Naive thymus-derived CD4-positive, alpha-beta T cell (primary cell): ENCODE measurements at regions of chr5 and their contacts with region 1.

Region 1: DNA sequence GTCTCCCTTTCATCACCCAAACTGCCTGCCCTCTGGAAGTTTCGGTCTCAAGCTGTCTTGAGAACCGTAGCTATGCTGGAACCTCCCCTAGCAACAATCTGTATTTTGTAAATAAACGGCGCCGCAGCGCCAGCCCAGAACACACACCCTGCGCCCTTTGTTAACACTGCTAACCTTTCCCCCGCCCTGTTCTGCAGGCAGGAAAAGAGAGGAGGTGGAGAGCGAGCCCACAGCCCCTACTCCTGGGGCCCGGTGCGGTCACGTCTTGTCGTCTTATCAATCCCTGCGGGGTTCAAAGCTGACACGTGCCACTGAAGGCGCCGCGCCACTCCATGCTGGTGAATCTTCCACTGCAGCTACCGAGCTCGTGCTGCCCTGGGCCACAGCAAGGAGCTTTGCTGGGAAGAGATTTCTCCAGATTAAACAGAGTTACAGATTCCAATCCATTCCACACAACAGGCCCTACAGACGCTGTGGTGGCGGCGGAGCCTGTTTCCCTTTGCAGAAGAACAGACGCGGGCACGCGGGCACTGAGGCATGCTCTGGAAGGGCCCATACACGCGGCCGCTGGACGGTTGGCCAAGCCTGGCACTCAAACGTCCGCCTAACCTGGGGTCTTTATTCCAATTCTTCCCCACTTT is 25.3 kb downstream of the ZDHHC11B start:
- DNase-seq: peak in 7 of 9 donors; percentile 12 to 60 (median 45)
- ATAC-seq: peak; percentile 89
- H3K4me3 ChIP-seq: no peak overlapping the region
- H3K4me3 Mint-ChIP-seq: peak overlapping the region in 8 of 10 donors; percentile 23 to 76 (median 50)
- H3K27ac ChIP-seq: no peak overlapping the region
- H3K27ac Mint-ChIP-seq: peak overlapping the region in 5 of 9 donors; percentile 30 to 92 (median 73)
- H3K4me1 ChIP-seq: peaks cover 0 to 6% of the 10 kb centered on the region in 2 donors
- H3K4me1 Mint-ChIP-seq: peaks cover 4 to 20% (median 8%) of the 10 kb centered on the region in 7 donors
- H3K27me3 ChIP-seq: no peaks in the 10 kb centered on the region
- H3K27me3 Mint-ChIP-seq: no peaks in the 10 kb centered on the region

Region 2: DNA sequence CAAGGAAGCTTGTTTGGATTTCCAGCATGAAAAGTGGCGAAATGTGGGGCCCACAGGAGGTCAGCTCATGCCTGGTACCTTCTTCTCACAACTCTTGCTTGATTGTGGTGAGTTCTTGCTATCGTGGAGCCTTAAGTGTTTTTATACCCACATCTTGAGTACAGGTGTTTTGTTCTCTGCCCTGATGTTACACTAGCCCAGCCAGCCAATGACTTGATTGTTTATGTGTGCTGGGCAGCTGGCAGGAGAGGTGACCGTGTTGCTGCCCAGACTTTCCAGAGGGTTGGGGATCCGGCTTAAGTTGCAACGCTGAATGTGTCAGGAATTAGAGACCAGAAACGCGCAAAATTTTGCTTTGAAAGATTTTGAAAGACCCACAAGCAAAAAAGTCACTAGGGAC is 42.1 kb before region 1 on chr5:
- CTCF ChIA-PET with region 1: no interaction called
- POLR2A ChIA-PET with region 1: no interaction called
- intact Hi-C with region 1: no loop called
- DNase-seq: no peak
- ATAC-seq: no peak
- H3K4me3 ChIP-seq: no peak overlapping the region
- H3K4me3 Mint-ChIP-seq: no peak overlapping the region
- H3K27ac ChIP-seq: no peak overlapping the region
- H3K27ac Mint-ChIP-seq: no peak overlapping the region
- H3K4me1 ChIP-seq: no peaks in the 10 kb centered on the region
- H3K4me1 Mint-ChIP-seq: no peaks in the 10 kb centered on the region
- H3K27me3 ChIP-seq: no peaks in the 10 kb centered on the region
- H3K27me3 Mint-ChIP-seq: peaks cover 10 to 58% (median 40%) of the 10 kb centered on the region in 5 donors

Region 3: DNA sequence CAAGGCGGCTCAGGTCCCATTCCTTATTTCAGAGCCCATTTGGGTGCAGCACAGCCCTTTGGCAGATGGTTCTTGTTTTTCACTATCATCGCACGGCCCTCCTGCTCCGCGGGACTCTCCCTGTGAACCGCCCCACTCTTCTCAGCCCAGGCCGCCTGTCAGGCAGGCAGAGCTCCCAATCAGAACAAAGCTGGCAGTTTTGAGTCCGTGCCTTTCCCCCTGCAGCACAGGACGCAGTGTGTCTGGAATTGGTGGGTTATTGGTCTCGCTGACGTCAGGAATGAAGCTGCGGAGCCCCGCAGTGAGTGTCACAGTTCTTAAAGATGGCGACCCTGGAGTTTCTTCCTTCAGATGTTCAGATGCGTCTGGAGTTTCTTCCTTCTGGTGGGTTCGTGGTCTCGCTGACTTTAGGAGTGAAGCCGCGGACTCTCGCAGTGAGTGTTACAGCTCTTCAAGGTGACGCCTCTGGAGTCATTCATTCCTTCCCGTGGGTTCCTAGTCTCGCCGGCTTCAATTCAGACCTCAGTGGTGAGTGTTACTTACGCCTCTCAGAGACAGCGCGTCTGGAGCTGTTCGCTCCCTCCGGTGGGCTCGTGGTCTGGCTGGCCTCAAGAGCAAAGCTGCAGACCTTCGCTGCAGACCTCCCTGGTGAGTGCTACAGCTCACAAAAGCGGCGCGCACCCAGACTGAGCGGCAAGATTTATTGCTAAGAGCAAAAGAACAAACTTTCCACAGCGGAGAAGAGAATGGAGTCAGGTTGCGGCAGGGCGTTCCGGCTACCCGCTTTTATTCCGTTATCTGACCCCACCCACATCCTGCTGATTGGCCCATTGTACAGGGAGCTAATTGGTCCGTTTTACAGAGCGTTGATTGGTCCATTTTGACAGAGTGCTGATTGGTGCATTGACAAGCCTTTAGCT is 17.8 kb after region 1 on chr5:
- CTCF ChIA-PET with region 1: no interaction called
- POLR2A ChIA-PET with region 1: no interaction called
- intact Hi-C with region 1: no loop called
- DNase-seq: no peak
- ATAC-seq: no peak
- H3K4me3 ChIP-seq: no peak overlapping the region
- H3K4me3 Mint-ChIP-seq: no peak overlapping the region
- H3K27ac ChIP-seq: no peak overlapping the region
- H3K27ac Mint-ChIP-seq: no peak overlapping the region
- H3K4me1 ChIP-seq: no peaks in the 10 kb centered on the region
- H3K4me1 Mint-ChIP-seq: no peaks in the 10 kb centered on the region
- H3K27me3 ChIP-seq: no peaks in the 10 kb centered on the region
- H3K27me3 Mint-ChIP-seq: peaks cover 0 to 4% (median 0%) of the 10 kb centered on the region in 5 donors

Region 4: DNA sequence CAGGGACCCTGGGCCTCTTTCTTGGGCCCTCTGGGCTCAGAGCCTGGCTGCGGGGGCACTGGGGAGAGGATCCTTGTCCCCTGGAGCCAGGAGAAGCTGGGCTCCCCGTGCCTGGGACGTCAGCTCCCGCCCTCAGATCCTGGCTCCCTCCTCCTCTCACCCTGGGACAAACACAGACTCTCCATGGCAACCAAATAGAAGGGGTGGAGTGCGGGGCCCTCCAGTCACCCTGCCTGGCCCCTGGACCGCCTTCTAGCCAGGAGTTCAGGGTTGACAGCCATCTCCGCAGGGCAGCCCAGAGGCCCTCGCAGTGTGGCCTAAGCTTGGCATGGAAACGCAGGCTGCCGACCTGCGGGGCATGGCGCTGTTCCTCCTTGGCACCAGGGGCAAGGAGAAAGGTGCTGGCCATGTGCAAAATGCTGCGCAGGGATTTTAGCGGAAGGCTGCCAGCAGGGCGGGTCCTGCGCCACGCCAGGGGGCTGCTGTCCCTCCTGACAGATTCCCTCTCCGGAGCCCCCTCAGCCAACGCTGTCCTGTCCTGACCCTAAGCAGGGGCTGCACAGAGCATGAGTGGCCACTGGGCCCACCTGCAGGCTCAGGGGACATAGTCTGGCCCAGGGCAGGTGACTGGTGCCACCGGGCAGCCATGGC is 90.5 kb after region 1 on chr5:
- CTCF ChIA-PET with region 1: no interaction called
- POLR2A ChIA-PET with region 1: no interaction called
- intact Hi-C with region 1: loop called in 1 of 2 experiments (anchors 5 kb)
- DNase-seq: no peak
- ATAC-seq: peak; percentile 15
- H3K4me3 ChIP-seq: no peak overlapping the region
- H3K4me3 Mint-ChIP-seq: no peak overlapping the region
- H3K27ac ChIP-seq: no peak overlapping the region
- H3K27ac Mint-ChIP-seq: no peak overlapping the region
- H3K4me1 ChIP-seq: no peaks in the 10 kb centered on the region
- H3K4me1 Mint-ChIP-seq: peaks cover 0 to 11% (median 2%) of the 10 kb centered on the region in 7 donors
- H3K27me3 ChIP-seq: no peaks in the 10 kb centered on the region
- H3K27me3 Mint-ChIP-seq: peaks cover 0 to 10% (median 4%) of the 10 kb centered on the region in 5 donors

Region 5: DNA sequence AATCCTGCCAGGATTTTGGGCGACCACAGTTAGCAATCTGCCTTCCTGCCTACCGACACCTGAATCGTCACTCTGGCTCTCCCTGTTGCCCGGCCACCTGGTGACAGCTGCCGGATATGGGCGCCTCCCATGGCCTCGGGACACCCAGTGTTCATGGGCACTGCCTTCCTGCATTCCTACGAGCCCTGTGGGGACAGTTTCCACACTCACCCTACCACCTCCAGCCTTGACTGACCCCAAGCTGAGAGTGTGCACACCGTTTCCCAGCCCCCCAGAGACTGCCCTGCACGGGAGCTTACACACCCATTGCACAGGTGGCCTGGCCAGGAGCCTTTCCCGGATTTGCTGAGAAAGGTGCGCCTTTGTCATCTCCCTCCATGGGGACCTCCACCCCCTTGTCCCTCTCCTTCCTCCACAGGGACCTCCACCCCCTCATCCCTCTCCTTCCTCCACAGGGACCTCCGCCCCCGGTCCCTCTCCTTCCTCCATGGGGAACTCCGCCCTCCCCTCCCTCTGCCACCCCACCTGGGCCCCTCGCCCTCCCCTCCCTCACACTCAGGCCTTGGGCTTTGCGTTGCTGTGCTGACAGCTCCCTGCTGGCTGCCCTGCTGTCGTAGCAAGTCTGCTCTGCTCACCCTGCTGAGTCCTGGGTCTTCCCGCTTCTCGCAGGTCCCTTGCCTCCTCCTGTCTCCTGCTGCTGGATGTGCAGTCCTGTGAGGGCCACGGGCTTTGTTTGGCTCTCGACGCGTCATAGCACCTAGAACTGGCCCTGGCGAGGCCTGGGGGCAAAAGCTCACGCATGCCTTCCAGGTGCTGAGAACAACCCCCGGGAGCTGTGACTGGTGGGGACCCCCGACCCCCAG is 992.0 kb after region 1 on chr5:
- CTCF ChIA-PET with region 1: no interaction called
- POLR2A ChIA-PET with region 1: no interaction called
- intact Hi-C with region 1: no loop called
- DNase-seq: peak in 2 of 9 donors; percentile 2 to 17
- ATAC-seq: no peak
- H3K4me3 ChIP-seq: no peak overlapping the region
- H3K4me3 Mint-ChIP-seq: no peak overlapping the region
- H3K27ac ChIP-seq: no peak overlapping the region
- H3K27ac Mint-ChIP-seq: no peak overlapping the region
- H3K4me1 ChIP-seq: no peaks in the 10 kb centered on the region
- H3K4me1 Mint-ChIP-seq: no peaks in the 10 kb centered on the region
- H3K27me3 ChIP-seq: no peaks in the 10 kb centered on the region
- H3K27me3 Mint-ChIP-seq: peaks cover 0 to 12% (median 0%) of the 10 kb centered on the region in 5 donors